ENCODE measurements at regions of chr6 and their contacts with region 1.

Region 1: GRCh38 chr6:27761391-27761790 is 150.8 kb downstream of the OR2B2 start:
- DNase-seq: no peak
- H3K4me3 ChIP-seq: no peak overlapping the region
- H3K27ac ChIP-seq: no peak overlapping the region
- H3K4me1 ChIP-seq: peaks cover 0 to 11% (median 2%) of the 10 kb centered on the region in 4 donors
- H3K27me3 ChIP-seq: peaks cover 5 to 83% (median 14%) of the 10 kb centered on the region in 3 donors
- CTCF ChIP-seq: no peak
- EP300 ChIP-seq: no peak
- POLR2A ChIP-seq: no peak

Region 2: GRCh38 chr6:27518881-27519795 is 242.3 kb before region 1 on chr6:
- intact Hi-C with region 1: loop called (anchors 10 kb)
- DNase-seq: peak; percentile 46 to 92
- H3K4me3 ChIP-seq: peak overlapping the region; percentile 59 to 67 (median 61)
- H3K27ac ChIP-seq: peak overlapping the region; percentile 65 to 89 (median 84)
- H3K4me1 ChIP-seq: peaks cover 6 to 9% (median 9%) of the 10 kb centered on the region in 4 donors
- H3K27me3 ChIP-seq: peaks cover 0 to 22% (median 12%) of the 10 kb centered on the region in 3 donors
- CTCF ChIP-seq: peak in 5 of 7 experiments; percentile 29 to 62 (median 50)
- EP300 ChIP-seq: no peak
- POLR2A ChIP-seq: no peak

Region 3: GRCh38 chr6:27642744-27643456 is 118.5 kb before region 1 on chr6:
- intact Hi-C with region 1: no loop called
- DNase-seq: no peak
- H3K4me3 ChIP-seq: no peak overlapping the region
- H3K27ac ChIP-seq: no peak overlapping the region
- H3K4me1 ChIP-seq: no peaks in the 10 kb centered on the region
- H3K27me3 ChIP-seq: peaks cover 0 to 39% (median 0%) of the 10 kb centered on the region in 3 donors
- CTCF ChIP-seq: no peak
- EP300 ChIP-seq: no peak
- POLR2A ChIP-seq: no peak